ENCODE measurements at regions of chr7 and their contacts with region 1.

Region 1: GRCh38 chr7:138886501-138886917 is 88.5 kb upstream of the ATP6V0A4 start:
- DNase-seq: peak; percentile 76
- CTCF ChIP-seq: peak; percentile 55

Region 2: GRCh38 chr7:138875794-138876193 is 10.7 kb before region 1 on chr7:
- CTCF ChIA-PET with region 1: interaction called, 27 read pairs
- POLR2A ChIA-PET with region 1: no interaction called
- DNase-seq: no peak
- CTCF ChIP-seq: no peak

Region 3: DNA sequence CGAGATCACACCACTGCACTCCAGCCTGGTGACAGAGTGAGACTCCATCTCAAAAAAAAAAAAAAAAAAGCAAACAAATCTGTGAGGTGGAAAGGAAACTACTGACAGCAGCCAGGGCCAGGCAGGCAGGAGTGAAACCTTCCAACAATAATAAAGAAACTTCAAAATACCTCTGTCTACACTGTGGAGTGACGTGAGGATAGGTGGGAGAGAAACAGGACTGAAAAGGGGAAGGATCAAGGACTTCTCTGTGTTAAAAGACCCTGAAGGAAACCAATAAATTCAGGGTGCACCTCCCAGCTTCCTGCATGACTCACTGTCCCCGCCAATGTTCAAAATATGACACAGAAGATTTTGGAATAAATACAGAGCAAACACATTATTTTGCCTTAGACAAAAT is 11.7 kb after region 1 on chr7:
- CTCF ChIA-PET with region 1: interaction called, 70 read pairs
- POLR2A ChIA-PET with region 1: no interaction called
- DNase-seq: peak; percentile 42
- CTCF ChIP-seq: no peak

Region 4: GRCh38 chr7:138907850-138908249 is 21.3 kb after region 1 on chr7:
- CTCF ChIA-PET with region 1: interaction called, 12 read pairs
- POLR2A ChIA-PET with region 1: no interaction called
- DNase-seq: no peak
- CTCF ChIP-seq: no peak

Region 5: DNA sequence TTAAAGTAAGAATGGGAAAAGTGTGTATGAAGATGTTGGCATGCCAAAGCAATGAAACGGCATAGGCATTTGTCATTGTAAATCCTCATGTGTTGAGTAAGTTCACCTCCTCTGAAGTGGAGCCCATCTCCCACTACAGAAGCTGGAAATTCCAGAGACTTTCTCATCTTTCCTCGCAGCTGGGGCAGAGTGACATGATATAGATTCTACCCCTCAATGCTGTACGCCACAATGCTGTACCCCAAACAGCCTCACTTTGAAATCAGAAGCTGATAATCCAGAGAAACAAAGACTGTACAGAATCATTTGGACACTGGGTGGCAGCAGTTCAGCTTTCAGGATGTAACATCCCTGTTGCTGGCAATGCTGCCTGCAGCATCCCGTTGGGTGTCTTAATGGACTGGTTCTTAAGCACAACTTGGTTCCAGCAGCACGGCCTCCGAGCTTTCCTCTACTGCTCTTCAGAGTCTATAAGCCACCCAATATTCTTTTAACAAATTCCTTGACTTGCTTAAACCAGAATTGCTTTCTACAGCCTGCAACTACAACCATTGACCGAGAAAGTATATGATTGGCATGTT is 130.5 kb after region 1 on chr7:
- CTCF ChIA-PET with region 1: interaction called, 11 read pairs
- POLR2A ChIA-PET with region 1: no interaction called
- DNase-seq: peak; percentile 81
- CTCF ChIP-seq: peak; percentile 62